GM10248 (cell line): ENCODE measurements at regions of chr17 and their contacts with region 1.

Region 1: DNA sequence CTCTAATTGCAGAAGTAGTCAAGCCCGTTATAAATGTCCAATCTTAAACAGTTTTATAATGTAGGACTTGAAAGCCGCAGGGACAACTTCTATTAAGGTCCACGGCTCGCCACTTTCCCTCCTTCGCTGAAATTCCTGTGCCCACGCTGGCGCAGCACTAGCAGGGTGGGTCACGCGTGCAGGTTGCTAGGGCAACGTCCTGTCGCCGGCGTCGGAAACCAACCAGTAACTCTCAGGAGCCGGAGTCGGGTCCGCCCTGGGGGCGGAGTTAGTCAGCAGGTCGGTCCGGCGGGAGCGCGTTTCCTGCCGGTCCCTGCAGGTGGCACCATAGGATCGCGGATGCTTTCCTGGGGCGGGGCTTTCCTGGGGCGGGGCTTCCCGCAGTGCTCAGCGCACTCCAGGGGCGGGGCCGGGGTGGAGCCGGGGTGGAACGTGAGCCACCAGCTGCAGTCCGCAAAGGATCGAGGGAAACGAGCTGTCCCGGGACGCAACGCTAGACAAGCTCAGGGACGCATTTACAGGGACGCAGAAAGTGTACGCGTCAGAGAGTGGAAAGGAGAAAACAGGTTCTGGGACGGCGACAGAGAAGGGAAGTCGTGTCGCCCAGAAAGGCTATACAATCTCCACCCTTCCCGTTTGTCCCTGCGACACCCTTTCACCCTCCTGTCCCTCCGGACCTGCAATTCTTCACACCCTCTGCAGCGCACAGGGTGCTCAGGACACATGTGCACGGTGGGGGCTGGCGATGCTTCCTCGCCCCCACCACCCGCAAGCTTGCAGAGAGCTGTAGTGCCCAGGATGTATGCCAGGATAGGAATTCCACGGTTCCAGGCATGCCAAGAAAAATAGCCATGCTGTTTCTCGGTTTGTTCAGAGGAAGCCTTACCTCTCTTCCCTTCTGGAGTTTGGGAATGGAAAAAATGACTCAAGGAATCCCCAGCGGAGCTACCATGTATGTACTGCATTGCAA is 12.4 kb downstream of the COPZ2 start:
- DNase-seq: peak; percentile 96
- CTCF ChIP-seq: peak; percentile 84

Region 2: DNA sequence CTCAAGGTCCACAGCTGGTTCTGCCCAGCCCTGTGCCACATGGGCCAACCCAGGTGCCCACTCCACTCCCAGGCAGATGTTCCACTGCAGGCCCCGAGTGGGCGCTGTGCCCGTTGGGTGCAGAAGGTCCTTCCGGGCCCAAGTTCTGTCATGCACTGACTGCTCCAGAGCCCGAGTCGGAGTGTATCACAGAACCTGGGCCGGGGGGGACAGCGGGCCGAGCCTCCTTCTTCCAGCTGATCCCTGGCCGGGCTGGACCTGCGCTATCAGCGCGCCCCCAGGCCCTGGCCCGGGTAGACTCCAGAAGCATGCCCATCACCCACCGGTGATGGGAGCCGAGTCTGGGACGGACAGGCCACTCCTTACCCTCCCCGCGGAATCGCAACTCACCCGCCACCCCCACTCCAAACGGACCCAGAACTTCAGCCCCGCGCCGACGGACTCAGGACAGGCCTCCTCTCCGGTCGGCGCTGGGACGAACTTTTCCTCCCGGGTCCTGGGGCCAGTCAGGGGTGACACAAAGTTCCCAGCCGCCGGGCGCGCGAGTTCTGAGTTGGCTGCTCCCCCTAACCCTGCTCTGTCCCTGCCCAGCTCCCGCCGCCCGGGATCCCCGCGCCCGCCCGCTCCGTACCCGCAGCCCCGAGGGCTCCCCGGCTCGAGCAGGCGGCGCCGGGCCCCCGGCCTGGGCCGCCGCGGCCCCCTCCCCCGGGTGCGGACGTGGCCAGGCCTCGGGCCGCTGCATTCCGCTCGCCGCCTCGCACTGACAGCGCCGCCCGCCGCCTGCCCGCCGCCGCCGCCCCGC is 12.0 kb after region 1 on chr17 and contains the start of gene COPZ2:
- CTCF ChIA-PET with region 1: interaction called, 54 read pairs
- POLR2A ChIA-PET with region 1: no interaction called
- DNase-seq: peak; percentile 63
- CTCF ChIP-seq: peak; percentile 73

Region 3: DNA sequence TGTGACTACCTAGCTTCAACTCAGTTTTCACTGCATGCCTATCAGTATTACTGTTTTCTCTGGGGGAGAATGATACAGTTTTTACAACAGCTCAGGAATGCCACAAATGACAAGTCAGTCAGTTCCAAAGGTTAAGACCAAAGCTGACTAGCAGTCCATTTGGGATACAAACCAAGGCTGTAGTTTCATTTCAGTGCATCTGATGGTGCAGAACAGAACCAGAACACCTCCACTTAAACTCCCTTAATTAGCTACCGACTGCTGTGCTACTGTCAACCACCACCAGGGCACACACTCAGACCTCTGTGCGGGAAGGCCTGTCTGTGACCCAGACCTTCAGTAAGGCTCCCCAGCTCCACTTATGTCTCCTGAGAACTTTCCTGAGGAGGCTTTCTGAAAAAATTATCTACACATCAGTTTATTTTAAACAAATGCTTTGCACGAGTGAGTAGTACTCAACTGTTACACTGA is 43.3 kb after region 1 on chr17:
- CTCF ChIA-PET with region 1: interaction called, 195 read pairs
- POLR2A ChIA-PET with region 1: no interaction called
- DNase-seq: no peak
- CTCF ChIP-seq: no peak

Region 4: DNA sequence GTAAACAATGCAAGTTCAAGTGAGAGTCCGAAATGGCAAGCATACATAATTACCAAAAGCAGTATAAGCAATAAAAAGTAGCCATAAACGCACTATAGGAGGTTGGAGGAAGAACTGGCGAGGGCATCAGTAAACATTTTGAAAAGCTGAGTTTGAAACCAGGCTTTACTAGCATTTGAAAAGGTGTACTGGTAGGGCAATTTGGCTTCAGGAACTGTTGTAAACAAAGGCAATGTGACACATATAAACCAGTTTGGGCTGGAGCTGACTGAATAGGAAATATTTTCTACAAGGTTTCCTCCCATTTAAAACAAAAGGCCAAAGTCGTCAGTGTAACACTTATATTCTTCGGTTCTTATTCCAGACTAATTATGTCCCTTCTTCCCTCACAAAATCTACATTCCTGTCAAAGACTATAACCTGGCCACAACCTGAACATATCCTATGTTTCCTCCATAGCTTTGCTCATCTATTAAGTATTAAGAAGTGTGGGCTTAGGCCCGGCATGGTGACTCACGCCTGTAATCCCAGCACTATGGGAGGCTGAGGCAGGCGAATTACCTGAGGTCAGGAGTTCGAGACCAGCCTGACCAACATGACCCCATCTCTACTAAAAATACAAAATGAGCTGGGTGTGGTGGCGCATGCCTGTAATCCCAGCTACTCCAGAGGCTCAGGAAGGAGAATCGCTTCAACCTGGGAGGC is 68.3 kb after region 1 on chr17:
- CTCF ChIA-PET with region 1: interaction called, 23 read pairs
- POLR2A ChIA-PET with region 1: interaction called, 3 read pairs
- DNase-seq: no peak
- CTCF ChIP-seq: no peak

Region 5: DNA sequence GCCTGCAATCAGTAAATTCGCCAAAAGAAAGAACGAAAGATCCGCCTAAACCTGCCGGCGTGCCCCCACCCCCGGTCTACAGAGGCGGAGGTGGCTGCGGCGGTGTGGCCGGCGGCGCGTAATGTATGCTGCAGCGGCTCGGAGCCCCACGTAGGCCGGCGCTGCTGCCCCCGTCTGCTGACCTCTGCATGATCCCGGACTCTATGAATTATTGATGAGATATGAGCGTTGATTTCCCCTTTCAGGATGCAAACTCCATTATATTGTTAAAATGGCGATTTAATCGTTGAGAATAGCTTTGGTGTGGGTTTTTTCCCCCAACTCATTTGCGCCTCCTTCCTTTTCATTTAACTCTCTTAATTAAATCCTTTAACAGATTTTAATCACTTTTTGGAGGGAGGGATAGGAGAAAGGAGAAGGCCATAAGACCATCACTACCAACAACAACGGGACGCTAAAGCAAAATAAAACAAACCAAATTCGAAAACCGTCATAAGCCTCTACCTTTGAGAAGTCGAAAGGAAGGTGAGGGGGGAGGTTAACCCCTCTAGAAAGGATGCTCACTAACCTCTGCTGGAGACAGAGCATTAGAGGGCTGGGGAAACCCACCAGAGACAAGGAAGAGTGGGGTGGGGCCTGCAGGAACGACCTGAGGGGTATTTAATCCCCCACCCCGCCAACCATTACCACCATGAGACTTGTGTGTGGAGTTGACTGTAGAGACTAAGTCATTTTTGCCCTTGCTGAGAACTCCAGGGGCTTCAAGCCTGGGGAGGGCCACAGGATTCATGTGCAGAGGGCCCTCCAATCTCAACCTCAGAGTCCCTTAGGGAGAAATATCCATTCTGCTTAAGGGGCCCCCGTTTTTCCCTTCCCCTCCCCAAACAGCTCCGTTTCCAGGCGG is 561.4 kb after region 1 on chr17:
- CTCF ChIA-PET with region 1: interaction called, 17 read pairs
- POLR2A ChIA-PET with region 1: no interaction called
- DNase-seq: peak; percentile 74
- CTCF ChIP-seq: no peak

Region 6: GRCh38 chr17:48612854-48613691 is 587.9 kb after region 1 on chr17:
- CTCF ChIA-PET with region 1: interaction called, 12 read pairs
- POLR2A ChIA-PET with region 1: no interaction called
- DNase-seq: peak; percentile 69
- CTCF ChIP-seq: no peak